Endothelial cell of umbilical vein (primary cell): ENCODE measurements at regions of chr5 and their contacts with region 1.

Region 1: DNA sequence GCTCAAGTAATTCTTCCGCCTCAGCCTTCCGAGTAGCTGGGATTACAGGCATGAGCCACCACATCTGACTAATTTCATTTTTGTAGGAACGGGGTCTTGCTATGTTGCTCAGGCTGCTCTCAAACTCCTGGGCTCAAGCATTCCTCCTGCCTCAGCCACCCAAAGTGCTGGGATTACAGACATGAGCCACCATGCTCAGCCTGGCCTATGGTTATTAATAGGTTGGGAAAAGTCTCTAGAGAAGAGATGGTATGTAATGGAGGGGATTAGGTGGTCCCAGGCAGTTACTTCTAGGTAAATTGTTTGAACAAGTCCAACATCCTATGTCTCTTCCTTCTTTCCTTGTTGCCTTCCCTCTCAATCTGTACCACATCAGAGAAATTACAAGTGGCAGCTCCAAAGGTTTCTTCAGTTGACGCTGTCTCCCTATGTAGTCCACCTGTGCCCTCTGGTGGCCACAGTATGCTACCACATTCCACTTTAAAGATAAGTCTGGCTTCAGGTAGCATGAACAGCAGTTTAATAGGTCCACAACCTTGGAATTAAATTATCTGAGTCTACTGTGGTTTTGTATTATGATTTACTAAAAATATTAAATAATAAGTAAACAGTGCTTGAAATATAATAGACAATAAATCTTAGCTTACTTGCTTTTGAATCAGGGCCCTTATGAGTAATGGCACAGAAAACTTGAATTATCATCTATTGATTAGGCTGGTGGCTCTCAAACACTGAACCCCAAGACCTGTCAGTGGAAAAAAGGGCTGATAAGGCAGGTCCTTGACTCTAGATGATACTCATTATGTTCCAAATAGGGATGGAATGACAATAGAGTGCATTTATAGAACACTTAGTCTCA is 9.7 kb downstream of the TIGD6 start:
- DNase-seq: peak; percentile 79
- H3K4me3 ChIP-seq: no peak overlapping the region
- H3K27ac ChIP-seq: no peak overlapping the region
- H3K4me1 ChIP-seq: no peaks in the 10 kb centered on the region
- H3K27me3 ChIP-seq: no peaks in the 10 kb centered on the region
- CTCF ChIP-seq: peak; percentile 78 to 83
- POLR2A ChIP-seq: no peak

Region 2: GRCh38 chr5:149636851-149637246 is 353.9 kb before region 1 on chr5:
- CTCF ChIA-PET with region 1: interaction called, 26 read pairs
- POLR2A ChIA-PET with region 1: no interaction called
- dilution Hi-C with region 1: no loop called
- intact Hi-C with region 1: loop called (anchors 2 kb)
- DNase-seq: peak; percentile 57
- H3K4me3 ChIP-seq: no peak overlapping the region
- H3K27ac ChIP-seq: no peak overlapping the region
- H3K4me1 ChIP-seq: peaks cover 12% of the 10 kb centered on the region
- H3K27me3 ChIP-seq: no peaks in the 10 kb centered on the region
- CTCF ChIP-seq: peak; percentile 72 to 74
- POLR2A ChIP-seq: no peak

Region 3: GRCh38 chr5:149834246-149834855 is 156.4 kb before region 1 on chr5:
- CTCF ChIA-PET with region 1: interaction called, 639 read pairs
- POLR2A ChIA-PET with region 1: no interaction called
- dilution Hi-C with region 1: no loop called
- intact Hi-C with region 1: loop called (anchors 1 kb)
- DNase-seq: peak; percentile 86
- H3K4me3 ChIP-seq: no peak overlapping the region
- H3K27ac ChIP-seq: no peak overlapping the region
- H3K4me1 ChIP-seq: peaks cover 1% of the 10 kb centered on the region
- H3K27me3 ChIP-seq: no peaks in the 10 kb centered on the region
- CTCF ChIP-seq: peak; percentile 79 to 80
- POLR2A ChIP-seq: no peak

Region 4: DNA sequence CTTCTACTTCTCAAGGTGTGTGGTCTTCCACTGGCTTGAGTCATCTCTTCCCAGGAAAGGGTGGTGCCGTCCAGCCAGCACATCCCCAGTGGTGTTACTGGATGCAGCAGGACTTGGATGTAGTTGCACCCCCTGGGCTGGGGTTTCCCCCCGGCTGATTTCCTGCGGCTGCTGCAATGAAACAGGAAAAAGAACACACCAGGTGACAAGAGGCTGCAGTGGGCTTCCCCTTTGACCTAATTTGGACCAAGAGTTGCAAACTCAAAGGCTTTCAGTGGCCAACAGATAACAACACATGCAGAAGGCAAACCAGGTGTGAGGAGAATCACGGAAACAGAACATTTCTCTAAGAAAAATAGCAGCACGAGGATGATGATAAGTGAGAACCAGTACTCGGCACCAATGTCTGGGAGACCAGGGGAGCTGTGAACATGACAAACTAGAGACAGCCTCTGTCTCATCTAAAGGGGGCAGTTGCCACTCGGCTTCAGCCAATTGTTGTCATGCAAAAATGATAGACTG is 129.9 kb before region 1 on chr5:
- CTCF ChIA-PET with region 1: interaction called, 16 read pairs
- POLR2A ChIA-PET with region 1: no interaction called
- dilution Hi-C with region 1: no loop called
- intact Hi-C with region 1: no loop called
- DNase-seq: no peak
- H3K4me3 ChIP-seq: no peak overlapping the region
- H3K27ac ChIP-seq: no peak overlapping the region
- H3K4me1 ChIP-seq: peaks cover 12% of the 10 kb centered on the region
- H3K27me3 ChIP-seq: no peaks in the 10 kb centered on the region
- CTCF ChIP-seq: no peak
- POLR2A ChIP-seq: no peak

Region 5: DNA sequence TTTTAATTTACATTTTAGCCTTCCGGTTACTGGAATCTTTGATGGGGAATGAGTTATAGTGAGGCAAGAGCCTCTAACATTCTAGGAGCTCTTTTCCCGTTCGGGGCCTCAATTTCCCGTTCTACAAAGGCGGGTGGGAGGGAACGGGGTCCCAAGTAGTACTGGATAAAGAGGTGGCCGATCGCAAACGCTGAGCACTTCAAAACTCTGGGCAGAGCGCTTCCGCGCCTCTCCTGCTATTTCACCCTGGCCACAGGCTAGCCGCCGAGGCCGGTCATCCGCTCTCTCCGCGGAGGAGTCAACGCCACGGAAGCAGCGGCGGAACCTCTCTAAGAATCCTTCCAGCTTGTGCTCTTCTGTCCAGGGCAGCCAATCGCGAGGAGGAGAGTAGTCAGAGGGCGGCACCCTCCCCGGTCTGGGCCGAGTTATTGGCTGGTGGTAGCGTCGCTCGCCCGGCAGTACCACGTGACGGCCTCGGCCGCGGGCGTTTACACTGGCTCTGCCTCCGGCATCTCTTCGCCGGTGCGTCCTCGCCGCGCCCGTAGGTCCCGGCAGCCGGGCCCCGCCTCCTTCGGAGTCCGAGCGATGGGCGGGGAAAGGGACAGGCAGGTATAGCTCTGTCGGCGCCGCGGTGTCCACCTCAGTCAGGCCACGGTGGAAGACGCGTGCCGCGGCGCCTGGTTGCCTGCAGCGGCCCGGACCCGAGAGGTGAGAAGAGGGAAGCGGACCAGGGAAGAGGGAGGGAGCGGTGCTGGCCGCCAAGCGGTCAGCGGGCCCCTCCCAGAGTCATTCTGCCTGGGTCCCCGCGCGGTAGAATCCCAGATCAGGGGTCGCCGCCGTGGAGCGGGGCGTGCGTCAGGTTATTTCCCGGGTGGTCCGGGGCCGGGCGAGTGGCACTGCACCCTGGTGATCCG is 30.2 kb before region 1 on chr5 and contains the start of gene SLC26A2:
- CTCF ChIA-PET with region 1: interaction called, 149 read pairs
- POLR2A ChIA-PET with region 1: no interaction called
- dilution Hi-C with region 1: no loop called
- intact Hi-C with region 1: loop called (anchors 1 kb)
- DNase-seq: peak; percentile 98
- H3K4me3 ChIP-seq: peak within 1 kb of the TSS; percentile 71 to 76 (median 74)
- H3K27ac ChIP-seq: peak within 1 kb of the TSS; percentile 85
- H3K4me1 ChIP-seq: peaks cover 21% of the 10 kb centered on the region
- H3K27me3 ChIP-seq: no peaks in the 10 kb centered on the region
- CTCF ChIP-seq: no peak
- POLR2A ChIP-seq: peak; percentile 88
- total RNA-seq, gene SLC26A2: 16.5 and 16.8 TPM in 2 replicates

Region 6: GRCh38 chr5:150022163-150022540 is 31.4 kb after region 1 on chr5:
- CTCF ChIA-PET with region 1: interaction called, 10 read pairs
- POLR2A ChIA-PET with region 1: no interaction called
- dilution Hi-C with region 1: no loop called
- intact Hi-C with region 1: no loop called
- DNase-seq: peak; percentile 97
- H3K4me3 ChIP-seq: peak overlapping the region in 1 of 3 experiments; percentile 46
- H3K27ac ChIP-seq: peak overlapping the region; percentile 92
- H3K4me1 ChIP-seq: peaks cover 43% of the 10 kb centered on the region
- H3K27me3 ChIP-seq: no peaks in the 10 kb centered on the region
- CTCF ChIP-seq: no peak
- POLR2A ChIP-seq: peak; percentile 14